Activated B cell treated with CpG ODN at 0.5 μM for 24 hours (primary cell): ENCODE measurements at regions of chr1 and their contacts with region 1.

Region 1: DNA sequence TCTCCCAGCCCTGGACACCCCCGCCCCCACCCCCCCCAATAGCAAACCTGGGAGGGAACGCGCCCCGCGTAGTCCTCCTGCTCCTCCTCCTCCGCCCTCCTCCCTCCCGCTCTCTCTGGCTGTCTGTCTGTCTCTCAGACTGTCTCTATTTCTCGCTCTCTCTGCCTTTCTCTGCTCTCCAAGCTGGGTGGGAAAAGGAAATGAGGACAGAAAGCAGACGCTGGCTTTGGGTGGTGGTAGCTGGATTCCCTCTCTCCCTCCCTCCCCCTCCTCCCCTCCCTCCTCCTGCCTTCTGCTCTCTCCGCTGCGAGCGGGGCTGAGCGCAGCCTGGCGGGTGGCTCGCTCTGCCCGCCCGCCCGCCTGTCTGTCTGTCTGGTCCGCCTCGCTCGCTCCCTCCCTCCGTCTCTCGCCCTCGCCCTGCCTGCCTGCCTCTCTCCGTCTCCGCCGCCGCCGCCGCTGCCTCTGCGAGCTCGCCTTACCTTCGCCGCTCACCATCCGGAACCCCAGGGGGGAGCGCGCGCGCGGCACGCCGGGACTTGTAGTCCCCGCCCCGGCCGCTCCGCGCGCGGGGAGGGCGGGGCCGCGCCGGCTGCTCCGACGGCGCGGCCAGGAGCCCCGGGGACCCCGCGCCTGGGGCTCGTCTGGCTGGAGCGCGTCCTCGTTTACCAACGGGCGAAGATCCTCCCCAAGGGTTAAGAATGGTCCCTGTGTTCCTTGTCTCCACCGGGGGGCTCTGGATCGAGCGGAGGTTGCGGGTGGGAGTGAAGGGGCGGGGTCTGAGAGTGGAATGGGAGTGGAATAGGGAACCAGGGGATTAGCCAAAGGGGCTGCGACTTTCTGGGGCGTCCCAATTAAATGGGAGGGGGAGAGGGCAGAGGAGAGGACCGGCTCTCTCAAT is at the start of gene AHDC1:
- DNase-seq: peak; percentile 89
- ATAC-seq: peak; percentile 78
- H3K4me3 Mint-ChIP-seq: peak within 1 kb of the TSS; percentile 95
- H3K27ac Mint-ChIP-seq: peak within 1 kb of the TSS; percentile 83
- H3K4me1 Mint-ChIP-seq: peaks cover 49% of the 10 kb centered on the region
- H3K27me3 Mint-ChIP-seq: no peaks in the 10 kb centered on the region
- CTCF ChIP-seq: no peak
- total RNA-seq, gene AHDC1: 22.4 and 23.3 TPM in 2 replicates

Region 2: GRCh38 chr1:27102707-27103491 is 501.0 kb before region 1 on chr1:
- CTCF ChIA-PET with region 1: no interaction called
- POLR2A ChIA-PET with region 1: interaction called, 15 read pairs
- intact Hi-C with region 1: loop called (anchors 5 kb)
- DNase-seq: peak; percentile 85
- ATAC-seq: peak; percentile 33
- H3K4me3 Mint-ChIP-seq: no peak overlapping the region
- H3K27ac Mint-ChIP-seq: no peak overlapping the region
- H3K4me1 Mint-ChIP-seq: peaks cover 41% of the 10 kb centered on the region
- H3K27me3 Mint-ChIP-seq: no peaks in the 10 kb centered on the region
- CTCF ChIP-seq: no peak

Region 3: DNA sequence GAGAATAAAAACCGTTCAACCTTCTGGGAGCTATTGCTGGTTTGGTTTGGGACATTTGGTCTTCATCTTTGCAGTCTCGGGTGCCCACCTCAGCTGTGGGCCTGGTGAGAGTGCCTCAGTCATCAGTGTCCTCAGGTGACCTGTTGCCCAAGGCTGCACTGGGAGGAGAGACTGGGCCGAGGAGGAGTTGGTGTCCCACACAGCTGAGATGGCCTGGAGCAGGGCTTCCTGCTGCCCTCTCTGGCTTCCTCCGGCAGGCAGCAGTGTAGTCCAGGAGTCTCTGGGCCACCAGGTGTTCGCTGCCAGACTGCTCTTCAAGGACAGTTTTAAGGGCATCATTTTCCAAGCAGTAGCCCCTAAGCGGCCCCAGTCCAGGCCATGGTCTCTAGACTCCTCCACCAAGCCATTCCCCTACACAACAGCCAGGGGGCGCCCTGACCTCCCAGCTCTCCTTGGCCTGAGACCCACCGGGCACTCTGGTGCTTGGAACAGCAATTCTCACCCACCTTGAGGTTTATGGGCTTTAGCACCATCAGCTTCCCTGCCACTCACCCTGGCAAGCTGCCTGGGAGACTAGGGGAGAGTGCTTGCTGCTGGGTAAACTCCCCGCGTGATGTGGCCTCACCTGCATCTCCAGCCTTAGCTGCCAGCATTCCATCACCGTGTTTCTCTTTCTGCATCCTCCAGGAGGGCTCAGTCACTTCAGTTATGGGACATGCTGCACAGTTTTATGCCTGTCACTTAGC is 271.2 kb before region 1 on chr1:
- CTCF ChIA-PET with region 1: interaction called, 5 read pairs
- POLR2A ChIA-PET with region 1: no interaction called
- intact Hi-C with region 1: loop called (anchors 1 kb)
- DNase-seq: peak; percentile 49
- ATAC-seq: peak; percentile 92
- H3K4me3 Mint-ChIP-seq: no peak overlapping the region
- H3K27ac Mint-ChIP-seq: no peak overlapping the region
- H3K4me1 Mint-ChIP-seq: peaks cover 34% of the 10 kb centered on the region
- H3K27me3 Mint-ChIP-seq: no peaks in the 10 kb centered on the region
- CTCF ChIP-seq: no peak

Region 4: GRCh38 chr1:27380766-27381733 is 222.9 kb before region 1 on chr1:
- CTCF ChIA-PET with region 1: no interaction called
- POLR2A ChIA-PET with region 1: no interaction called
- intact Hi-C with region 1: no loop called
- DNase-seq: no peak
- ATAC-seq: no peak
- H3K4me3 Mint-ChIP-seq: no peak overlapping the region
- H3K27ac Mint-ChIP-seq: no peak overlapping the region
- H3K4me1 Mint-ChIP-seq: peaks cover 6% of the 10 kb centered on the region
- H3K27me3 Mint-ChIP-seq: peaks cover 2% of the 10 kb centered on the region
- CTCF ChIP-seq: no peak

Region 5: DNA sequence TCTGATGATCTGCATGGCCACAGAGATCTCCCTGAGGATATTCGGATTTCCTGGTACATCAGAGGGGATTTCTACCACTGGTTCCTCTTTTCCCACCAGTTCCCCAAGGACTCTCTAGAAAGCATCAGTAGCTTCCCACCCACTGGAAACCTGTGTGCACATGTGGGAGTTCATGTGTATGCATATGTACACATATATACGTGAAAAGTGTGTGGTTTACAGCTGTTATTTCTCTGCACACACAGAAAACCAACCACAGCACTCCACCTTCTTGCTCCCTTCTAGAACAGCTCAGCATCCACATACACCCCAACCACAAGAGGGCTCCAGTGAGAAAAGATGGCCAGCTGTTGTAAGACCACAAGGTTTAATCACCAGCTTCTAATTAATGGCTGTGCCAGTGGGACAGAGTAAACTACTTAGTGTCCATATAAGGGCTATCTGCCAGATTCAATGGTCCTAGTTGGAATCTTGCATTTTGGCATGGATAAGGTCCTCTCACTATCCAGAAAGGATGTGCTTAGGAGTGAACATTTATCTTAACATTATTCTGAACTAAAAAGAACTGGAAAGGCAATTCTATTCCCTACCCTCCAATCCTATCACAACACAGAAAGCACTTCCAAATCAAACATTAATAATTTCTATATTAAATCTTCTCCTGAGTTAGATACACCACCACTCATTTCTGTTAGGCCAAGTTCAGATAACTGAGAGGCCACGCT is 187.4 kb before region 1 on chr1:
- CTCF ChIA-PET with region 1: interaction called, 14 read pairs
- POLR2A ChIA-PET with region 1: interaction called, 4 read pairs
- intact Hi-C with region 1: loop called (anchors 1 kb)
- DNase-seq: no peak
- ATAC-seq: peak; percentile 52
- H3K4me3 Mint-ChIP-seq: peak overlapping the region; percentile 32
- H3K27ac Mint-ChIP-seq: peak overlapping the region; percentile 89
- H3K4me1 Mint-ChIP-seq: peaks cover 55% of the 10 kb centered on the region
- H3K27me3 Mint-ChIP-seq: no peaks in the 10 kb centered on the region
- CTCF ChIP-seq: no peak

Region 6: DNA sequence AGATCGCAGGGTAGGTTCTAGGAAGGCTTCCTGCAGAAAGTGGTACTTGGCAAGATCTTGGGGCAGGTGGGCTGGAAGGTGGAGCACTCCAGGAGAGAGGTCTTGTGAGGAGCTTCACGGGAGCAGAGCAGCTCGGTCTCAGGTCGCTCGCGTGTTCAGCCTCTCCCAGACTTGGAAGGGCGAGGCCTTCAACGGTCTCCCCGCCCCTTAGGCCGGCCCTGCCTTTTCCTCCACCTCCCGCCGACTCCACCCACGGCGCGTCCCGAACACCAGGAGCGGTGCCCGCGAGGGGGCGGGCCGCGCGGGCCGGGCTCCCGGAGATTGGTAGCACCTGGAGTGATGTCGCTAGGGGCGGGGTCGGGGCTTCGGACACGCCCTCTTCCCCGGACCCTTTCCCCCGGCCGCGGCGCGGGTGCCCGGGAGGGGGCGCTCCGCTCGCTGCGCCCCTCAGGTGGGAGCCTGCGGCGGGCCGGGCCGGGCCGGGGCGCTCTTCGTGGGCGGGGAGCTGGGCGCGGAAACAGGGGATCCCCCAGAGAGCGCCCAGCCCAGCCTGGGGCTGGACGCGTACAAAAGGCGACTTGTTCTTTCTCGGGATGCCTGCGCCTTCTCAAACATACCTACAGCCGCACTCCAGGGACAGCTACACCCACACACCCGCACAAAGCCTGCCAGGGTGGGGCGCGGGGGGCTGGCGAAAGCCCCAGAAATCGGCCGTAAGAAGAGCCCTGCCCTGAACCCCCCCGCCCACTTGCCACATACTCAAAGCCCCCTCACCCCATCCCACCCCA is 35.4 kb before region 1 on chr1:
- CTCF ChIA-PET with region 1: interaction called, 8 read pairs
- POLR2A ChIA-PET with region 1: interaction called, 9 read pairs
- intact Hi-C with region 1: loop called (anchors 1 kb)
- DNase-seq: peak; percentile 94
- ATAC-seq: peak; percentile 91
- H3K4me3 Mint-ChIP-seq: peak overlapping the region; percentile 73
- H3K27ac Mint-ChIP-seq: no peak overlapping the region
- H3K4me1 Mint-ChIP-seq: peaks cover 33% of the 10 kb centered on the region
- H3K27me3 Mint-ChIP-seq: no peaks in the 10 kb centered on the region
- CTCF ChIP-seq: no peak

Region 7: GRCh38 chr1:27830621-27831424 is 226.9 kb after region 1 on chr1 and contains the start of gene PPP1R8:
- CTCF ChIA-PET with region 1: no interaction called
- POLR2A ChIA-PET with region 1: no interaction called
- intact Hi-C with region 1: loop called (anchors 5 kb)
- DNase-seq: peak; percentile 84
- ATAC-seq: peak; percentile 98
- H3K4me3 Mint-ChIP-seq: peak within 1 kb of the TSS; percentile 95
- H3K27ac Mint-ChIP-seq: peak within 1 kb of the TSS; percentile 89
- H3K4me1 Mint-ChIP-seq: peaks cover 22% of the 10 kb centered on the region
- H3K27me3 Mint-ChIP-seq: no peaks in the 10 kb centered on the region
- CTCF ChIP-seq: no peak
- total RNA-seq, gene PPP1R8: 48.3 and 52.0 TPM in 2 replicates